Prostate gland (tissue), 2 donors: ENCODE measurements at regions of chr5 and their contacts with region 1.

Region 1: DNA sequence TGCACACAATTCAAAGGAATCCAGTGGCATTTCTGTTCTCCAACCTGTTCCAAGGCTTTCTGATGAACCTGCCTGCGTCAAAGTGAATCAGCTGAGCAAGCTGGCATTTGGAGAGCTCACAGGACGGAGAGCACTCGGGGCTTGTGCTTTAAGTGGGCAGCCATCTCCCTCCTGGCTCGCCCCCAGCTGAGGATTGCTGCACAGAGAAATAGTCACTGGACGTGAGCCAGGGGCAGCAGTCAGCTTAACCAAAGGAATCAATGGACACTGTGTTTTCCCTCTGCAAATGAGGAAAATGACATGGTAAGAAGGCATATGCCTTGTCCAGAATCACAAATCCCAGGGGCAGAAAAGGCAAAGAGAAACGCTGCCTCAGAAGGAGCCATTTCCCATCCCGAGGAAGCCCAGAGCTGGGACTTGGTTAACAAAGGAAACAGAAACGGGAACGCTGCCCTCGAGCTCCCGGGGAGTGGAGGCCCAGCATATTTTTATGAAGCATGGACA is 299.4 kb downstream of the ZSWIM6 start:
- DNase-seq: no peak
- H3K4me3 ChIP-seq: no peak overlapping the region
- H3K27ac ChIP-seq: peak overlapping the region in 1 of 2 donors; percentile 43
- H3K4me1 ChIP-seq: no peaks in the 10 kb centered on the region
- H3K27me3 ChIP-seq: no peaks in the 10 kb centered on the region
- CTCF ChIP-seq: no peak
- POLR2A ChIP-seq: no peak

Region 2: DNA sequence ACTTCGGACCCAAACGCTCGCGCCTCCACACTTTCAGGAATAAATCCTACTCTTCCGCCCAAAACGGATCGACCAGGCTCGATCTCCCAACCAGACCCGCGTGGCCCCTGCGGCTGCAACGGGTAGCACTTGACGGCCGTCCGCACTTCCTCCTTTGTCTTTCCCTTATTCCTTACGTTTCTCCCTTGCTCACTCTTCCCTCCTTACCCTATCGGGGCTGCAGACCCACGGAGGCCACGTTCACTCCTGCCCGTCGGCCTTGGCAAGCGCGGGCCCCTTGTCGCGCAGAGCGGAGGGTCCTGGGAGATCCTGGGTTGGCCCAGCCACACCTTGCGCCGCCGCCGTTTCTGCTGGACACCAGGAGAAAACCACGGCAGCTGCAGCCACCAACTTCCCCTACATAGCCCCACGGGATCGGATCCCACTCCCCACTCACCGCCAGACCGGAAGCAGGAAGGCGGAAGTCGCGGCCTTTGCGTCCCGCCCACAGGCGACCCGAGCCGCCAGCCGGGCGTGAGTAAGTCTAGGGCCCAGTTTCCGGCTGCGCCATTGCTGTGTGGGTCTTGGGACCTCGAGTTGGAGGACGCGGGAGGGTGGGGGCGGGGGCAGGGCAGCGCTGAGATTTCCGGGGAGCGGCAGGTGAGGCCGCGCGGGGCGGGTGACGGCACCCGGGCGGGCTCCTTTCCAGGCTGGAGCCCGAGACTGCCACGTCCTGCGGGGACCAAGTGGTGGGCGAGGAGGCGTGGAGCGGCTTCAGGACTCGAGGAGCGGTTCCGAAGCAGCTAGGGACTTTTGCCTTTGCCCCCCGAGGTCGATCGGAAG is 469.3 kb before region 1 on chr5 and contains the start of gene SMIM15:
- intact Hi-C with region 1: loop called (anchors 10 kb)
- DNase-seq: peak; percentile 89
- H3K4me3 ChIP-seq: peak within 1 kb of the TSS; percentile 84 to 86
- H3K27ac ChIP-seq: peak within 1 kb of the TSS; percentile 95
- H3K4me1 ChIP-seq: no peaks in the 10 kb centered on the region
- H3K27me3 ChIP-seq: no peaks in the 10 kb centered on the region
- CTCF ChIP-seq: peak in 1 of 4 experiments; percentile 15
- POLR2A ChIP-seq: peak; percentile 55
- total RNA-seq, gene SMIM15: 30.0 to 53.1 TPM